ENCODE measurements at regions of chr2 and their contacts with region 1.

Region 1: GRCh38 chr2:158903711-158904443 is 64.6 kb upstream of the TANC1 start:
- DNase-seq: no peak
- H3K4me3 ChIP-seq: no peak overlapping the region
- H3K27ac ChIP-seq: no peak overlapping the region
- H3K4me1 ChIP-seq: no peaks in the 10 kb centered on the region
- H3K27me3 ChIP-seq: no peaks in the 10 kb centered on the region
- CTCF ChIP-seq: no peak

Region 2: DNA sequence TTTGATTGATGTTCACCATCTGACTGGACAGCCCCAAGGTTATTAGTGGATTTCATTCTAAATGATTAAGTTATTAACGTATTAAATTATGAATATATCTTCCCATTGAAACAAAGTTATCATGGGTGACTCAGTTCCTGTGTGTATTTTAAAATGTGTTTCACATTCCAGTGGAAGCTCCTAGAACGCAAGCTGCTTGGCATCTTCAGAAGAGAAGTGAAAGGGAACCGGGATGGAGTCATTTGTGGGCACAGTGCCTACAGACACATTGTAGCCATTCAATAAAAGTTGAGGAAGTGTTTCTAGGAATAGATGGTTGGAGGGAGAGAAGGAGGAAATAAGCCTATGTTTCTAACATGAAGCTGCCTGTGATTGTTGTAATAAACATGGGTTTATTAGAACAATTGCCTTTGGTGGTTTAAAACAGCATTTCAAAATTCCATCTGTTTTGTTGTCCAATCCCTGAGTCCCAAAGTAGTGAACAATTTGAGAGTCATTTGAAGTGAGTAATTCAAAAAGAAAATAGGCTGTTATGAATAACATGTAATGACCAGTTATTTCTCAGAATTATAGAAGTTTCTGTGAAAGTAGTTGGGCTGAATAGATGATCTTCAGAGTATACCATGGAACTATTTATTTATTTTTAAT is 303.6 kb before region 1 on chr2:
- CTCF ChIA-PET with region 1: no interaction called
- POLR2A ChIA-PET with region 1: no interaction called
- intact Hi-C with region 1: no loop called
- DNase-seq: peak; percentile 62
- H3K4me3 ChIP-seq: no peak overlapping the region
- H3K27ac ChIP-seq: no peak overlapping the region
- H3K4me1 ChIP-seq: peaks cover 5% of the 10 kb centered on the region
- H3K27me3 ChIP-seq: no peaks in the 10 kb centered on the region
- CTCF ChIP-seq: no peak

Region 3: GRCh38 chr2:158716121-158716771 is 187.6 kb before region 1 on chr2:
- CTCF ChIA-PET with region 1: no interaction called
- POLR2A ChIA-PET with region 1: no interaction called
- intact Hi-C with region 1: no loop called
- DNase-seq: no peak
- H3K4me3 ChIP-seq: no peak overlapping the region
- H3K27ac ChIP-seq: no peak overlapping the region
- H3K4me1 ChIP-seq: no peaks in the 10 kb centered on the region
- H3K27me3 ChIP-seq: no peaks in the 10 kb centered on the region
- CTCF ChIP-seq: no peak

Region 4: DNA sequence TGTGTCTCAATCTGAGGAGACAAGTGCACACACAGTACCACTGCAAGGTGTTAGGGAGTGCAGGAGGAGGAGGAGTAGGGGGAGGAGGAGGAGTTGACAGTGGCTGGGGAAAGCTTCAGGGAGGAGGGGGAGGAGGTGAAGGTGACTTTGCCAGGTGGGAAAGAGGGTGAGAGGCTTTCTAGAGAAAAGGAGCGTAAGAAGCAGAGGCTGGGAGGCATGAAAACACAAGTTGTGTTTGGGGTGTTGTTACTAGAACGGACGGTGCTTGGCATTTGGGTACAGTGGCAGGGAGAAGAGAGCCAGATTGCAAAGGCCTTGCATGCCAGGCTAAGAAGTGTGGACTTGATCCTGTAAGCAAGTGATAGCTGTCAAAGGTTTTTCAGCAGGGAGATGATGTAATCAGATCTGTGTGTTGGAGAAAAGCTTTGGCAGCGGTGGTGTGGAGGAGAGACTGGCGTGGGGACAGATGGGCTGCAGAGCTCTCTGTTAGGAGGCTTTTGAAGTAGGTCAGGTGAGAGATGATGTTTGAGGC is 80.8 kb after region 1 on chr2:
- CTCF ChIA-PET with region 1: no interaction called
- POLR2A ChIA-PET with region 1: no interaction called
- intact Hi-C with region 1: no loop called
- DNase-seq: no peak
- H3K4me3 ChIP-seq: no peak overlapping the region
- H3K27ac ChIP-seq: no peak overlapping the region
- H3K4me1 ChIP-seq: peaks cover 16% of the 10 kb centered on the region
- H3K27me3 ChIP-seq: no peaks in the 10 kb centered on the region
- CTCF ChIP-seq: no peak

Region 5: GRCh38 chr2:159118115-159118858 is 214.4 kb after region 1 on chr2:
- CTCF ChIA-PET with region 1: interaction called, 10 read pairs
- POLR2A ChIA-PET with region 1: no interaction called
- intact Hi-C with region 1: loop called (anchors 1 kb)
- DNase-seq: peak; percentile 84
- H3K4me3 ChIP-seq: no peak overlapping the region
- H3K27ac ChIP-seq: no peak overlapping the region
- H3K4me1 ChIP-seq: no peaks in the 10 kb centered on the region
- H3K27me3 ChIP-seq: no peaks in the 10 kb centered on the region
- CTCF ChIP-seq: peak; percentile 94

Region 6: DNA sequence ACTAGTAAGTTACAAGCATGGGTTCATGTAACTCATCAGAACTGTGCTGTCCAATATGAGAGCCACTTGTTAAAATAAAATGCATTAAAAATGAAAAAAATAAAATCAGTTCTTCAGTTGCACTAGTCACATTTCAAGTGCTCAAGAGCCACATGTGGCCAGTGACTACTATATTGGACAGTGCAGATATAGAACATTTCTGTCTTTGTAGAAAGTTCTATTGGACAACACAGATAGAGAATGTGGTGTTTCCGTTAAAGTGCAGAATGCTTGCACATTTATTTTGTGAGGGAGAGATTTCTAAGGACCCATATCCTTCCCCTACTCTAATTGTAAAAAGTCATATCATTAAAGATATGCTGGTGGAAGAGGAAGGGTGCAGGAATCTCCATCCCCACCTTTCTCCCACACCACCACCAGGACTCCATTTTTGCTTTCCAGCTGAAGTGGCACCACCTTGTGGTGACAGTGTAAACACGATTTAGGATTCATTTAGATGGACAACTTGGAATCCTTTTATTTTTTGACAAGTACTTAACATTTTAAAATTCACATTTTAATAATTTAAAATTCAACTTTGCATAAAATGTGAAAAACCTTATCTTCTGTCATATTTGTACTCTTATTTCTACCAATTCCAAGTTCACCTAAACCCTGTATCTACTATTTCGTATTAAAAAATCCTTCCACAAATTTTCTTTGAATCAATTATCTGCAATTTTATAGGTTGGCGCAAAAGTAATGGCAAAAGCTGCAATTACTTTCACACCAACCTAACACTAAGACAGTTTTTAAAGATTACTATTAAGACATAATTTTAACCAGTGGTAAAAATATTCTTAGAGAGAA is 903.5 kb after region 1 on chr2:
- CTCF ChIA-PET with region 1: no interaction called
- POLR2A ChIA-PET with region 1: no interaction called
- intact Hi-C with region 1: loop called (anchors 5 kb)
- DNase-seq: peak; percentile 72
- H3K4me3 ChIP-seq: no peak overlapping the region
- H3K27ac ChIP-seq: no peak overlapping the region
- H3K4me1 ChIP-seq: no peaks in the 10 kb centered on the region
- H3K27me3 ChIP-seq: peaks cover 14% of the 10 kb centered on the region
- CTCF ChIP-seq: peak; percentile 83

Region 7: DNA sequence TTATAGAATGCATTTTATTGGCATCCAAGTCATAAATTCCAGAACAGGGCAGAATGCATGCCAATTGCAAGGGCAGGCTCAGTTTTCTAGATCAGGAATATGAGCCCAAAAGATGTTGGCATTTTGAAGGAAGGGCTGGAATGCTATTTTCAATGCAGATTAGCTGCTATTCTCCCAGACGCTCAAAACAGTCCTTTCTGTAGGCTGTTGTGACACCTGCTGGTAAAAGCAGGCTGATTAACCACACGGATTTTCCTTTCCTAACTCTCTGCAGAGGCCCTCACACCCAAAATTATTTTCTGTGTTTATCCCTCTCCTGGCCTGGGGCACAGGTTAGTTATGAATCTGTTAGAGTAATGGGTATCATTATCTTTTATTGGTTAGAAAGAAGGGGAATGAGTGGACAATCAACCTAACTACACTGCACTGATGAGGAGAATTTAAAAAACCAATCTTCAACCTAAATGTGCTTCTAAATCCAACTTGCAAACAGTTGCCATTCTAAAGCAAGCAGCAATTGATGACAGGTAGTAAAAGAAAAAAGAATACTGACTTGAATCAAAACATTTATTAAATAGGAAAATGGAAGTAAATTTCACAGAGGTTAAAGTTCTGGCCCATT is 1064.5 kb after region 1 on chr2:
- CTCF ChIA-PET with region 1: no interaction called
- POLR2A ChIA-PET with region 1: no interaction called
- intact Hi-C with region 1: loop called (anchors 5 kb)
- DNase-seq: peak; percentile 60
- H3K4me3 ChIP-seq: no peak overlapping the region
- H3K27ac ChIP-seq: no peak overlapping the region
- H3K4me1 ChIP-seq: no peaks in the 10 kb centered on the region
- H3K27me3 ChIP-seq: no peaks in the 10 kb centered on the region
- CTCF ChIP-seq: peak; percentile 64

Measured in A673 (cell line).